Naive thymus-derived CD4-positive, alpha-beta T cell (primary cell): ENCODE measurements at regions of chr3 and their contacts with region 1.

Region 1: GRCh38 chr3:16884084-16884747 is 539 bp upstream of the PLCL2 start:
- DNase-seq: peak; percentile 44 to 77 (median 66)
- ATAC-seq: peak; percentile 69
- H3K4me3 ChIP-seq: peak overlapping the region; percentile 46
- H3K4me3 Mint-ChIP-seq: peak overlapping the region; percentile 90 to 99 (median 96)
- H3K27ac ChIP-seq: peak overlapping the region; percentile 78
- H3K27ac Mint-ChIP-seq: peak overlapping the region; percentile 92 to 99 (median 97)
- H3K4me1 ChIP-seq: peaks cover 12 to 14% of the 10 kb centered on the region in 2 donors
- H3K4me1 Mint-ChIP-seq: peaks cover 27 to 40% (median 35%) of the 10 kb centered on the region in 7 donors
- H3K27me3 ChIP-seq: no peaks in the 10 kb centered on the region
- H3K27me3 Mint-ChIP-seq: peaks cover 0 to 7% (median 0%) of the 10 kb centered on the region in 5 donors

Region 2: GRCh38 chr3:15578289-15578867 is 1305.8 kb before region 1 on chr3:
- CTCF ChIA-PET with region 1: no interaction called
- POLR2A ChIA-PET with region 1: no interaction called
- intact Hi-C with region 1: no loop called
- DNase-seq: no peak
- ATAC-seq: no peak
- H3K4me3 ChIP-seq: no peak overlapping the region
- H3K4me3 Mint-ChIP-seq: no peak overlapping the region
- H3K27ac ChIP-seq: no peak overlapping the region
- H3K27ac Mint-ChIP-seq: peak overlapping the region in 1 of 9 donors; percentile 87
- H3K4me1 ChIP-seq: no peaks in the 10 kb centered on the region
- H3K4me1 Mint-ChIP-seq: peaks cover 0 to 10% (median 0%) of the 10 kb centered on the region in 7 donors
- H3K27me3 ChIP-seq: no peaks in the 10 kb centered on the region
- H3K27me3 Mint-ChIP-seq: no peaks in the 10 kb centered on the region

Region 3: GRCh38 chr3:16290007-16290826 is 594.0 kb before region 1 on chr3:
- CTCF ChIA-PET with region 1: no interaction called
- POLR2A ChIA-PET with region 1: no interaction called
- intact Hi-C with region 1: loop called in 1 of 2 experiments (anchors 5 kb)
- DNase-seq: peak in 6 of 9 donors; percentile 44 to 67 (median 62)
- ATAC-seq: peak; percentile 58
- H3K4me3 ChIP-seq: peak overlapping the region; percentile 67
- H3K4me3 Mint-ChIP-seq: peak overlapping the region; percentile 87 to 99 (median 96)
- H3K27ac ChIP-seq: peak overlapping the region; percentile 90
- H3K27ac Mint-ChIP-seq: peak overlapping the region; percentile 86 to 99 (median 97)
- H3K4me1 ChIP-seq: peaks cover 32 to 65% of the 10 kb centered on the region in 2 donors
- H3K4me1 Mint-ChIP-seq: peaks cover 38 to 77% (median 53%) of the 10 kb centered on the region in 7 donors
- H3K27me3 ChIP-seq: no peaks in the 10 kb centered on the region
- H3K27me3 Mint-ChIP-seq: no peaks in the 10 kb centered on the region

Region 4: DNA sequence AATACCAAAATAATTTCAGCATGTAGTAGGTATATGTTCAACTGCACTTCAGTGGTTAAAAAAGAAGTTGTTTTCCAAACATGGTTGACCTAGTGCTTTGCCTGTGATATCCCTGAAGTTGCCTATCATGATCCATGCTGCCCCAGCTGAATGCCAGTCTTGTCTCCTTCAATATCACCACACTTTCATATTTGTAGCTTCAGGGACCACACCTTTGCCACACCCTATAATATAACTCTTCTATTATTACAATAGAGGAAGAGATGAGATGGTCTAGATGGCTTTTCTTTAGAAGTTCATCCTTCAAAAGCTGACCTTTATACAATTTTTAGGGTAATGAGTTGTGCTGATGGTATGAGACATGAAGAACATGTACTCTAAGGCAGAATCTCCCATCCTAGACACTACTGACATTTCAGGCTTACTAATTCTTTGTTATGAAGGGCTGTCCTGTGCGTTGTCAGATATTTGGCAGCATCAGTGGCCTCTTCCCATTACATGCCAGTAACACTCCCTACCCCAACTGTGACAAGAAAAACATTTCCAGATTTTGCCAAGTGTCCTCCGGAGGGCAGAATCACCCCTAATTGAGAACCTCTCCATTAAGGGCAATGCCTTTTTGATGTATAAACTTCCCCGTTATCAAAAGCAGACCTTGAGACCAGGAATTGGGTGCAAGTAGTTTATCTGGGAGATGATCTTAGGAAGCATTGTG is 75.7 kb before region 1 on chr3:
- CTCF ChIA-PET with region 1: interaction called, 3 read pairs
- POLR2A ChIA-PET with region 1: no interaction called
- intact Hi-C with region 1: loop called in 1 of 2 experiments (anchors 2 kb)
- DNase-seq: peak in 2 of 9 donors; percentile 8 to 16
- ATAC-seq: no peak
- H3K4me3 ChIP-seq: no peak overlapping the region
- H3K4me3 Mint-ChIP-seq: no peak overlapping the region
- H3K27ac ChIP-seq: no peak overlapping the region
- H3K27ac Mint-ChIP-seq: no peak overlapping the region
- H3K4me1 ChIP-seq: peaks cover 13 to 14% of the 10 kb centered on the region in 2 donors
- H3K4me1 Mint-ChIP-seq: peaks cover 8 to 36% (median 25%) of the 10 kb centered on the region in 7 donors
- H3K27me3 ChIP-seq: no peaks in the 10 kb centered on the region
- H3K27me3 Mint-ChIP-seq: peaks cover 0 to 43% (median 0%) of the 10 kb centered on the region in 5 donors

Region 5: GRCh38 chr3:16897254-16897926 is 13.2 kb after region 1 on chr3:
- CTCF ChIA-PET with region 1: interaction called, 5 read pairs
- POLR2A ChIA-PET with region 1: interaction called, 20 read pairs
- intact Hi-C with region 1: loop called (anchors 1 kb)
- DNase-seq: peak in 6 of 9 donors; percentile 31 to 66 (median 52)
- ATAC-seq: peak; percentile 65
- H3K4me3 ChIP-seq: no peak overlapping the region
- H3K4me3 Mint-ChIP-seq: peak overlapping the region; percentile 44 to 86 (median 67)
- H3K27ac ChIP-seq: no peak overlapping the region
- H3K27ac Mint-ChIP-seq: peak overlapping the region; percentile 25 to 96 (median 92)
- H3K4me1 ChIP-seq: peaks cover 58 to 79% of the 10 kb centered on the region in 2 donors
- H3K4me1 Mint-ChIP-seq: peaks cover 66 to 94% (median 89%) of the 10 kb centered on the region in 7 donors
- H3K27me3 ChIP-seq: no peaks in the 10 kb centered on the region
- H3K27me3 Mint-ChIP-seq: no peaks in the 10 kb centered on the region

Region 6: GRCh38 chr3:16945330-16945729 is 61.1 kb after region 1 on chr3:
- CTCF ChIA-PET with region 1: no interaction called
- POLR2A ChIA-PET with region 1: no interaction called
- intact Hi-C with region 1: no loop called
- DNase-seq: no peak
- ATAC-seq: no peak
- H3K4me3 ChIP-seq: no peak overlapping the region
- H3K4me3 Mint-ChIP-seq: peak overlapping the region in 1 of 10 donors; percentile 30
- H3K27ac ChIP-seq: no peak overlapping the region
- H3K27ac Mint-ChIP-seq: peak overlapping the region in 2 of 9 donors; percentile 8 to 30
- H3K4me1 ChIP-seq: peaks cover 40 to 42% of the 10 kb centered on the region in 2 donors
- H3K4me1 Mint-ChIP-seq: peaks cover 36 to 87% (median 79%) of the 10 kb centered on the region in 7 donors
- H3K27me3 ChIP-seq: no peaks in the 10 kb centered on the region
- H3K27me3 Mint-ChIP-seq: no peaks in the 10 kb centered on the region

Region 7: DNA sequence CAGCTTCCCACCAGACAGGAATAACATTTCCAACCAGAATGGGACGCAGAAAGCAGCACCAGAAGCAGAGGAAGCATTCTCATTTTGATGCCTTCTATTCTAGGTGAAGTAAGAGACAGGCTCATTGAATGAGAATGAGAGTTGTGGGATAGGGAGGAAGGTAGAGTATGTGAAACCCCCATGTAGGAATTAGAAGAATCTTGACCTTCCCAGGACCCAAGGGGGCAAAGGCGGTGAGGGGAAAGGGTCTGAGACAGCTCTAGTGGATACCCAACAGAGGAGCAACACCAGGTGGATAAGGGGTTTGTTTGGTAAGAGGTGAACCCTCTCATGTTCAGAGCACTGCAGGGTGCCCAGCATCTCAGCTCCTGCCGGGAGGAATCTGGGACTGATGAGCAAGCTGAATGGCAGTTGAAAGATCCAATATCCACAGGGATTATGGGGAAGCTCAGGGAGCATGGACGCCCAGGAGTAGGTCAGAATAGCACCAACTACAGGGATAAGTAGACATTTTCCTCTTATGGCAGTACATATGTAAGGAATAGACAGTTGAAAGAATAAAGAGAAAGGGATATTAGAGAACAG is 77.5 kb after region 1 on chr3:
- CTCF ChIA-PET with region 1: no interaction called
- POLR2A ChIA-PET with region 1: no interaction called
- intact Hi-C with region 1: no loop called
- DNase-seq: no peak
- ATAC-seq: no peak
- H3K4me3 ChIP-seq: no peak overlapping the region
- H3K4me3 Mint-ChIP-seq: peak overlapping the region in 1 of 10 donors; percentile 0
- H3K27ac ChIP-seq: no peak overlapping the region
- H3K27ac Mint-ChIP-seq: peak overlapping the region in 8 of 9 donors; percentile 16 to 67 (median 46)
- H3K4me1 ChIP-seq: peaks cover 5 to 6% of the 10 kb centered on the region in 2 donors
- H3K4me1 Mint-ChIP-seq: peaks cover 8 to 59% (median 56%) of the 10 kb centered on the region in 7 donors
- H3K27me3 ChIP-seq: no peaks in the 10 kb centered on the region
- H3K27me3 Mint-ChIP-seq: no peaks in the 10 kb centered on the region

Region 8: GRCh38 chr3:17032407-17033034 is 148.3 kb after region 1 on chr3:
- CTCF ChIA-PET with region 1: interaction called, 4 read pairs
- POLR2A ChIA-PET with region 1: no interaction called
- intact Hi-C with region 1: loop called (anchors 1 to 2 kb)
- DNase-seq: no peak
- ATAC-seq: no peak
- H3K4me3 ChIP-seq: no peak overlapping the region
- H3K4me3 Mint-ChIP-seq: peak overlapping the region in 1 of 10 donors; percentile 11
- H3K27ac ChIP-seq: no peak overlapping the region
- H3K27ac Mint-ChIP-seq: peak overlapping the region in 7 of 9 donors; percentile 4 to 60 (median 17)
- H3K4me1 ChIP-seq: peaks cover 0 to 24% of the 10 kb centered on the region in 2 donors
- H3K4me1 Mint-ChIP-seq: peaks cover 48 to 90% (median 80%) of the 10 kb centered on the region in 7 donors
- H3K27me3 ChIP-seq: no peaks in the 10 kb centered on the region
- H3K27me3 Mint-ChIP-seq: no peaks in the 10 kb centered on the region

Region 9: DNA sequence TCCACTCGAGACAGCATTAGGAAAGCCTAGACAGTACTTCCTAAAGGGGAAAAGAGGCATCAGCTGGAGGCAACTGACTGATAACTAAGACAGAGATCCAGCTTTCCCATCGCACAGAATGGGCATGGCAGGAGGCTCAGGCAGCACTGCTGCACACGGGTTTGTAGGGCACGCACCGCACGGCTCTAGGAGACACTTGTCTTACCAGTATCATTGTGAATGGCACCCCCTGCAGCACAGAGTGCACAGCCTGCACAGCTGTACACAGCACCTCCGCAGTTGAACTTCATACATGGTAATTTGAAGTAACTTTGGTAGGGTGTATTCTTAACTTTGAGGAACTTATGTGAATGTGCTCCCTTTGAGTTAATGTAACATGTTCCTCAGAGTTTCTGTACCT is 282.2 kb after region 1 on chr3:
- CTCF ChIA-PET with region 1: no interaction called
- POLR2A ChIA-PET with region 1: no interaction called
- intact Hi-C with region 1: loop called in 1 of 2 experiments (anchors 1 kb)
- DNase-seq: peak in 4 of 9 donors; percentile 7 to 22 (median 14)
- ATAC-seq: no peak
- H3K4me3 ChIP-seq: no peak overlapping the region
- H3K4me3 Mint-ChIP-seq: no peak overlapping the region
- H3K27ac ChIP-seq: no peak overlapping the region
- H3K27ac Mint-ChIP-seq: peak overlapping the region in 2 of 9 donors; percentile 41 to 65
- H3K4me1 ChIP-seq: no peaks in the 10 kb centered on the region
- H3K4me1 Mint-ChIP-seq: peaks cover 0 to 15% (median 0%) of the 10 kb centered on the region in 7 donors
- H3K27me3 ChIP-seq: no peaks in the 10 kb centered on the region
- H3K27me3 Mint-ChIP-seq: no peaks in the 10 kb centered on the region